ENCODE measurements at regions of chr15 and their contacts with region 1.

Region 1: DNA sequence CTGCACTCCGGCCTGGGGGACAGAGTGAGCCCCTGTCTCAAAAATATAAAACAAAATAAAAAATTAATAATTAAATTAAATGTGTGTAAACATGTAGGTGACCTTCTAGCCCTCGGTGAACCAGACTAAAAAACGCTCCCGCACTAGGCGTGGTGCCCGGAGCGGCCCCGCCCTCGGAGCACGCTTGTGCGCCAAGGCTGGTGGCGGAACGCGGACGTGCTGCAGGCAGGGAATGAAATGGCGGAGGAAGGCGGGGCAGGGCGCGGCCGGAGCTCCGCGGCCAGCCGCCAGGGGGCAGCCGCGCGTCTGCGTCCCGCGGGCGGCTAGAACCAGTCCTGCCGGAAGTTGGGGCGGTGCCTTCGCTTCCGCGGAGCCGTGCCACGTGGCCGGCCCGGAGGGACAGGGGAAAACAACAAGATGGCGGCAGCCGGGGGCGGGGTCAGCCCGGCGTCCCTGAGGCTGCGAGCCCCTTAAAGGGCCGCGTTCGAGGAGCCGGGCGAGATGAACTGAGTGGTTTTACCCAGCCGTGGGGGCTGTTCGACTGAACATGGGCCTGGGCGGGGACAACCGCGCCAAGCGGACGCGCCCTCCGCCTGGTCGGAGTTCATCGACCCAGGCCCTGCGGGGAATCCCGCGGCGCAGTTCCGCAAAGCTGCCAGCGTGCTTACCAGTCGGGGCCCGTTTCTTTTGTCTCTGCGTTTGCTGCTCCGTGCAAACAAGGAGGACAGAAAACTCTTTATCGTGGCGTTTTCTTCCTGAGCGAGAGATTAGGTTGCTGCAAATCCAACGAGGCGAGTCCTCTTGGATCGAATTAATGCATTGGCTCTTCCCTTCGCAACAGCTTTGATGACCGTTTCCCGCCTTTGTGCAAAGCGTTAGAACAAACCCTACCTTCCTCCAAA is 90.9 kb upstream of the CHD2 start:
- DNase-seq: peak; percentile 100
- ATAC-seq: peak; percentile 81
- H3K4me3 ChIP-seq: peak overlapping the region; percentile 66 to 94 (median 76)
- H3K4me3 Mint-ChIP-seq: peak overlapping the region; percentile 92
- H3K27ac ChIP-seq: peak overlapping the region; percentile 96 to 99
- H3K27ac Mint-ChIP-seq: peak overlapping the region; percentile 99
- H3K4me1 ChIP-seq: peaks cover 21 to 25% of the 10 kb centered on the region in 2 donors
- H3K4me1 Mint-ChIP-seq: peaks cover 32% of the 10 kb centered on the region
- H3K27me3 ChIP-seq: no peaks in the 10 kb centered on the region
- H3K27me3 Mint-ChIP-seq: no peaks in the 10 kb centered on the region
- CTCF ChIP-seq: peak; percentile 96

Region 2: DNA sequence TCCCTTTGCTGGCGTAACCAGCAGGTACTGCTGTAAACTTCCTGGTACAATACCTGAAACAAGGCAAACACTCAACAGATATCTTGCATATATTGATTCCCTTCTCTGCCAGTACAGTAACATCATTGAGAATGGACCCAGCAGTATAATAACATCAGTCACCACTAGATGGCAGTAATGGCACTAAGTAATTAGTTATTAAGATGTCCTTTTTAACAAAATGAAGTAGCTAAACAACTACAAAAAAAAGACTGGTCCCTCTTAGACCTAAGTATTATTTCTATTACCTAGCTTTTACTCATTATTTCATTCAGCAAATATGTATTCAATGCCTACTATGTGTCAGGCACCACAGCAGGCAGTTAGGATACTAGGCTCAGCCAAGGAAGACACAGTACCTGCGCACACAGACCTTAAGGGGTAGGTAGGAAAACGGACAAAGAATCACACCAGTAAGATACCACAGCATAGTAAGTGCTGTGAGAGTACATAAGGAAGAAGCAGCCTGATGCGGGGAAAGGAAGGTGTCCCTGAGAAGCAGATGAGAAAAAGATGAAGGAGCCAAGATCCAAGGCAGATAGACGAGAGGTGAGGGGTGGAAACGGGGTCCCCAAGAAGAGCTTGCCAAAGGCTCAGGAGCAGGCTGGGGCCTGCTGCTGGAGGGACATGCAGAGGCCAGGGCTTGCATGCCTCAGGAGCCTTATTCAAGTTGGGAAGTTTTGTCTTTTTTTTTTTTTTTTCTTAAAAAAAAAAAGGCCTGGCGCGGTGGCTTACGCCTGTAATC is 11.9 kb before region 1 on chr15:
- CTCF ChIA-PET with region 1: interaction called, 43 read pairs
- POLR2A ChIA-PET with region 1: interaction called, 5 read pairs
- intact Hi-C with region 1: loop called (anchors 1 kb)
- DNase-seq: peak; percentile 87
- ATAC-seq: peak; percentile 78
- H3K4me3 ChIP-seq: no peak overlapping the region
- H3K4me3 Mint-ChIP-seq: no peak overlapping the region
- H3K27ac ChIP-seq: no peak overlapping the region
- H3K27ac Mint-ChIP-seq: peak overlapping the region; percentile 54
- H3K4me1 ChIP-seq: peaks cover 4% of the 10 kb centered on the region in 2 donors
- H3K4me1 Mint-ChIP-seq: peaks cover 3% of the 10 kb centered on the region
- H3K27me3 ChIP-seq: no peaks in the 10 kb centered on the region
- H3K27me3 Mint-ChIP-seq: no peaks in the 10 kb centered on the region
- CTCF ChIP-seq: peak; percentile 79

Region 3: GRCh38 chr15:92831655-92832328 is 22.6 kb after region 1 on chr15:
- CTCF ChIA-PET with region 1: interaction called, 39 read pairs
- POLR2A ChIA-PET with region 1: interaction called, 115 read pairs
- intact Hi-C with region 1: loop called (anchors 1 kb)
- DNase-seq: peak; percentile 95
- ATAC-seq: peak; percentile 93
- H3K4me3 ChIP-seq: peak overlapping the region; percentile 23 to 65 (median 45)
- H3K4me3 Mint-ChIP-seq: peak overlapping the region; percentile 85
- H3K27ac ChIP-seq: peak overlapping the region; percentile 85 to 95
- H3K27ac Mint-ChIP-seq: peak overlapping the region; percentile 97
- H3K4me1 ChIP-seq: peaks cover 57 to 62% of the 10 kb centered on the region in 2 donors
- H3K4me1 Mint-ChIP-seq: peaks cover 50% of the 10 kb centered on the region
- H3K27me3 ChIP-seq: no peaks in the 10 kb centered on the region
- H3K27me3 Mint-ChIP-seq: no peaks in the 10 kb centered on the region
- CTCF ChIP-seq: no peak

Region 4: GRCh38 chr15:92845126-92845508 is 35.9 kb after region 1 on chr15:
- CTCF ChIA-PET with region 1: interaction called, 16 read pairs
- POLR2A ChIA-PET with region 1: interaction called, 20 read pairs
- intact Hi-C with region 1: loop called (anchors 1 kb)
- DNase-seq: peak; percentile 83
- ATAC-seq: peak; percentile 52
- H3K4me3 ChIP-seq: peak overlapping the region in 4 of 5 experiments; percentile 32 to 51 (median 38)
- H3K4me3 Mint-ChIP-seq: peak overlapping the region; percentile 83
- H3K27ac ChIP-seq: peak overlapping the region; percentile 74 to 79
- H3K27ac Mint-ChIP-seq: peak overlapping the region; percentile 96
- H3K4me1 ChIP-seq: peaks cover 61 to 70% of the 10 kb centered on the region in 2 donors
- H3K4me1 Mint-ChIP-seq: peaks cover 67% of the 10 kb centered on the region
- H3K27me3 ChIP-seq: no peaks in the 10 kb centered on the region
- H3K27me3 Mint-ChIP-seq: no peaks in the 10 kb centered on the region
- CTCF ChIP-seq: no peak

Region 5: DNA sequence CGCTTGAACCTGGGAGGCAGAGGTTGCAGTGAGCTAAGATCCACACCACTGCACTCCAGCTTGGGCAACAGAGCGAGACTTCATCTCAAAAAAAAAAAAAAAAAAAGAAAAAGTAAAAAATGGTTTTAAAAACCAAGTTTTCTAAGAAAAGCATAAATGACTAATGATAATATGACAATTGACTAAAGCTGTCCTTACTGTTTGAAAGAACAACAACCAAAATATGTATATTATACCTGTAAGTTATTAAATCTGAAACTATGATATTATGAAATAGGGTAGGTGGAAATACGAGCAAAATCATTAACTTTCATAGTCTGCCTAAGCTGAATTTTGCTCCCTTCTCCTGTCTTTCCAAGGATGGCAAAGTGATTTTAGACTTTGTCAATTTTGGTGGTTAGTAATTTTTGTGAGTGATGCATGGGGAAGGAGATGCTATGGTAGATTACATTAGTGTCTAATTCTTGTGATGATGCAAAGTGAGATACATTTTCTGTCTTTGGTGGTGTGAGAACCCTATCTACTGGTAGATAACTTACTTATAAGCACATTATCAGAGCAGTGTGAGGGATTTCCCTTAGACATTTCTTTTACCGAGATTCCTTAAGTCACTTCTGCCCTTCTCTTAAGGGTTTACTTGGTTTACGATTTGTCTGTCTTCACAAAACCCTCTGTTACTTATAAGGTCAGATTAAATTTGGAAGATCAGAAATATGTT is 80.3 kb after region 1 on chr15:
- CTCF ChIA-PET with region 1: interaction called, 75 read pairs
- POLR2A ChIA-PET with region 1: interaction called, 266 read pairs
- intact Hi-C with region 1: no loop called
- DNase-seq: no peak
- ATAC-seq: no peak
- H3K4me3 ChIP-seq: peak overlapping the region in 1 of 5 experiments; percentile 8
- H3K4me3 Mint-ChIP-seq: peak overlapping the region; percentile 23
- H3K27ac ChIP-seq: peak overlapping the region in 1 of 2 donors; percentile 62
- H3K27ac Mint-ChIP-seq: peak overlapping the region; percentile 59
- H3K4me1 ChIP-seq: peaks cover 14 to 50% of the 10 kb centered on the region in 2 donors
- H3K4me1 Mint-ChIP-seq: peaks cover 58% of the 10 kb centered on the region
- H3K27me3 ChIP-seq: no peaks in the 10 kb centered on the region
- H3K27me3 Mint-ChIP-seq: no peaks in the 10 kb centered on the region
- CTCF ChIP-seq: no peak

Region 6: GRCh38 chr15:92903941-92904831 is 95.0 kb after region 1 on chr15:
- CTCF ChIA-PET with region 1: interaction called, 83 read pairs
- POLR2A ChIA-PET with region 1: interaction called, 164 read pairs
- intact Hi-C with region 1: loop called (anchors 1 kb)
- DNase-seq: peak; percentile 99
- ATAC-seq: peak; percentile 82
- H3K4me3 ChIP-seq: peak overlapping the region; percentile 64 to 100 (median 85)
- H3K4me3 Mint-ChIP-seq: peak overlapping the region; percentile 92
- H3K27ac ChIP-seq: peak overlapping the region; percentile 95 to 97
- H3K27ac Mint-ChIP-seq: peak overlapping the region; percentile 100
- H3K4me1 ChIP-seq: peaks cover 48 to 57% of the 10 kb centered on the region in 2 donors
- H3K4me1 Mint-ChIP-seq: peaks cover 64% of the 10 kb centered on the region
- H3K27me3 ChIP-seq: no peaks in the 10 kb centered on the region
- H3K27me3 Mint-ChIP-seq: no peaks in the 10 kb centered on the region
- CTCF ChIP-seq: no peak

Measured in B cell (primary cell).